Activated B cell treated with CpG ODN at 0.5 μM for 24 hours (primary cell): ENCODE measurements at regions of chrX and their contacts with region 1.

Region 1: GRCh38 chrX:25020905-25021449 is 5.2 kb upstream of the ARX start:
- DNase-seq: no peak
- ATAC-seq: no peak
- H3K4me3 Mint-ChIP-seq: peak overlapping the region; percentile 6
- H3K27ac Mint-ChIP-seq: no peak overlapping the region
- H3K4me1 Mint-ChIP-seq: peaks cover 18% of the 10 kb centered on the region
- H3K27me3 Mint-ChIP-seq: peaks cover 40% of the 10 kb centered on the region
- CTCF ChIP-seq: no peak

Region 2: DNA sequence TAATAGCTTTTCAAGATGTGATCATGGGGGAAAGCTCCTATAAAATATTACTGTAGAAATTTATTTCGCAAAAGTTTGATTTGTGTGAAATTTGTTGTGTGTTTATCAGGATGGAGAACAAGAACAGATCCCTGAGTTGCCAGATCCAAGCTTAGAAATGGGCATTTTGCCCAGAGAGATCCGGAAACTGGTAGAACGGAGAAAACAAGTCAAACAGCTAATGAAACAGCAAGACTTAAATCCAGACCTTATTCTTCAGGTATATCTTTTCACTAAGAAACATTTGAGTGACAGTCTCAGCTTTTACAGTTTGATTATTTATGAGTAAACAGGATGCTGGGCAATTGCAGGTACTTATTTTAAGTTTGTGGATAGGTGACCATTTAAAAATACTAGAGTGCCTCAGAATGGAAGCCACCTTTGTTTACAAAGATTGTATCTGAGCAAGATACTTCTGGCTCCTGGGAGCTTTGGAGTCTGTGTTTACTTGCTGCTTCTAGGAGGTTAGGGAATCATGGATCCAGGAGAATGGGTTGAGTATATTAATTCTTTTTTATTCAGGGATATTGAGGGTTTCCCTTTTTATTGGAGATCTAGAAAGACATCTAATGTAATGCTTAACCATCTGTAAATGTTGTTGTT is 272.7 kb before region 1 on chrX:
- CTCF ChIA-PET with region 1: no interaction called
- POLR2A ChIA-PET with region 1: no interaction called
- intact Hi-C with region 1: loop called (anchors 1 kb)
- DNase-seq: no peak
- ATAC-seq: no peak
- H3K4me3 Mint-ChIP-seq: no peak overlapping the region
- H3K27ac Mint-ChIP-seq: no peak overlapping the region
- H3K4me1 Mint-ChIP-seq: no peaks in the 10 kb centered on the region
- H3K27me3 Mint-ChIP-seq: no peaks in the 10 kb centered on the region
- CTCF ChIP-seq: no peak

Region 3: GRCh38 chrX:24838629-24839028 is 182.3 kb before region 1 on chrX:
- CTCF ChIA-PET with region 1: no interaction called
- POLR2A ChIA-PET with region 1: no interaction called
- intact Hi-C with region 1: loop called (anchors 2 kb)
- DNase-seq: no peak
- ATAC-seq: no peak
- H3K4me3 Mint-ChIP-seq: no peak overlapping the region
- H3K27ac Mint-ChIP-seq: no peak overlapping the region
- H3K4me1 Mint-ChIP-seq: peaks cover 10% of the 10 kb centered on the region
- H3K27me3 Mint-ChIP-seq: no peaks in the 10 kb centered on the region
- CTCF ChIP-seq: no peak

Region 4: DNA sequence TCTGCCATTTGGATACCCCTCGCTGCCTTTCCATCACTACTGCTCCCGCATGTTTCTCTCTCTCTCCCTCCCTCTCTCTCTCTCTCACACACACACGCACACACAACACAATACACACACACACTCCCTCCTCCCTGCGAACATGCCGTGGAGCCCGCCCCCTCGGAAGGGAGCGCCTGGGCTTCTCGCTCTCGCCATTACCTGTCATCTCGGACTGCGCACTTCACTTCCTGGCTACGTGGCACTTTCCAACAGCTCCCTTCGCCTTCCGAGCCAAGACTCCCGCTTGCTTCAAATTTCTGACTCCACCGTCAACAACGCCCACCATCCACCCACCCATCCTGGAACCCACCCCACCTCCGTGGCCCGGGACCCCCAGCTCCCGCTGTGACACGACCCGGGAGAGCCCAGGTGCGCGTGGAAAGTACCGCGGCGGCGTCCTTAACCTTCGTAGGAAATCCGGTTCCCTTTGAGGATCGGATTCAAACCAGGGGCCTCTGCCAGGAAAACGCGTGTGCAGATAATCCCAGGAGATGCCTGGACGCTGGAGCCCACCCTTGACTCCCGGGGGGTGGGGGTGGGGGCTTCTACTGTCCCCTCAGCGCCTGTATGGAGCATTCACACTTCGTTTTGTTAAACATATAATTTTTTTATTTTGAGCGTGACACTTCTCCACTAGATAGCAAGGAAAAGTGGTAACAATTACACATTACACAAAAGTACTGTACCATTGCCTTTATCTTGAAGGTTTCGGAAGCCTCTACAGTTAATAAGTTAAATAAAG is 17.7 kb before region 1 on chrX:
- CTCF ChIA-PET with region 1: no interaction called
- POLR2A ChIA-PET with region 1: no interaction called
- intact Hi-C with region 1: loop called (anchors 2 kb)
- DNase-seq: no peak
- ATAC-seq: no peak
- H3K4me3 Mint-ChIP-seq: peak overlapping the region; percentile 45
- H3K27ac Mint-ChIP-seq: no peak overlapping the region
- H3K4me1 Mint-ChIP-seq: peaks cover 19% of the 10 kb centered on the region
- H3K27me3 Mint-ChIP-seq: peaks cover 24% of the 10 kb centered on the region
- CTCF ChIP-seq: no peak